ENCODE measurements at regions of chr4 and their contacts with region 1.

Region 1: DNA sequence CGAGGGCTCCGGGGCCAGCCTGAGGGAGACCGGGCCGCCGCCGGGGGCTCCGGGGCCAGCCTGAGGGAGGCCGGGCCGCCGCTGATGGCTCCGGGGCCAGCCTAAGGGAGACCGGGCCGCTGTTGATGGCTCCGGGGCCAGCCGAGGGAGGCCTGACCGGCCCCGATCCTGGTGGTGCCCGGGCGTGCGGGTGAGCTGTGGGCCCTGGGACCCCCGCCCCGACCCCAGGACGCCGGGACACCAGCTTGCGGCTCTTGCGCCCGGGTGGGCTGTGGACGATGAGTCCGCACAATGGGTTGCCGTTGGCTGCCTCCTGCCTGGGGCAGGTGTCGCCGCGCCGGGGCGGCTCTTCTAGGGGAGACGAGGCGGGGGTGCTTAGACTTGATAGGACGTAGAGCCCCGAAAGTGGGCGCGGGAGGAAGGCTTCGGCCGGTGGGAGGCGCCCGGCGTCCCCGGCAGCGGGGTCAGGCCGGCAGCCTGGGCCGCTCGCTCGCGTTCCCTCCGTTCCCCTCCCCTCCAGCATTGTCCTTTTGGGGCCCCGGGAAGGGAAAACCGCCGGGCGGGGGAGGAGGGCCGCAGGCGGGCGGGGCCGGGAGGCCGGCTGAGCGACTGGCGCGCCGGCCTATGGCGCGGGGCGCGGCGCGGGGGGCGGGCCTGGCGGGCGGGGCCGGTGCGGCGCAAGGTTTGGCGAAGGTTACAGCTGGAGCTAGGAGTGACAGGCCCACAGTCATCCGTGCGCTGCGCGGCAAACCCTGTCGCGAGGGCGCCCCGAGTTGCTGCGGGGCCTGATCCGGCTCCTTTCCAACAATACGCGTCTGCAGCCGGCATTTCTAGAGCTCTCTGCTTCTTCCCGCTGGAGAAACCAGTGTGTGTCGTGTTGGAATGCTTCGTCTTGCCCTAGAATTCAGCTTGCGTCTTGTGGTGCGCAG is 790 bp downstream of the KIAA0232 start:
- DNase-seq: peak; percentile 79 to 93 (median 87)
- ATAC-seq: peak; percentile 72
- H3K4me3 ChIP-seq: peak overlapping the region; percentile 72 to 93
- H3K4me3 Mint-ChIP-seq: peak overlapping the region; percentile 89
- H3K27ac ChIP-seq: peak overlapping the region; percentile 76 to 94
- H3K27ac Mint-ChIP-seq: peak overlapping the region; percentile 84
- H3K4me1 ChIP-seq: peaks cover 63% of the 10 kb centered on the region
- H3K4me1 Mint-ChIP-seq: peaks cover 70% of the 10 kb centered on the region
- H3K27me3 ChIP-seq: no peaks in the 10 kb centered on the region
- H3K27me3 Mint-ChIP-seq: no peaks in the 10 kb centered on the region
- CTCF ChIP-seq: no peak

Region 2: DNA sequence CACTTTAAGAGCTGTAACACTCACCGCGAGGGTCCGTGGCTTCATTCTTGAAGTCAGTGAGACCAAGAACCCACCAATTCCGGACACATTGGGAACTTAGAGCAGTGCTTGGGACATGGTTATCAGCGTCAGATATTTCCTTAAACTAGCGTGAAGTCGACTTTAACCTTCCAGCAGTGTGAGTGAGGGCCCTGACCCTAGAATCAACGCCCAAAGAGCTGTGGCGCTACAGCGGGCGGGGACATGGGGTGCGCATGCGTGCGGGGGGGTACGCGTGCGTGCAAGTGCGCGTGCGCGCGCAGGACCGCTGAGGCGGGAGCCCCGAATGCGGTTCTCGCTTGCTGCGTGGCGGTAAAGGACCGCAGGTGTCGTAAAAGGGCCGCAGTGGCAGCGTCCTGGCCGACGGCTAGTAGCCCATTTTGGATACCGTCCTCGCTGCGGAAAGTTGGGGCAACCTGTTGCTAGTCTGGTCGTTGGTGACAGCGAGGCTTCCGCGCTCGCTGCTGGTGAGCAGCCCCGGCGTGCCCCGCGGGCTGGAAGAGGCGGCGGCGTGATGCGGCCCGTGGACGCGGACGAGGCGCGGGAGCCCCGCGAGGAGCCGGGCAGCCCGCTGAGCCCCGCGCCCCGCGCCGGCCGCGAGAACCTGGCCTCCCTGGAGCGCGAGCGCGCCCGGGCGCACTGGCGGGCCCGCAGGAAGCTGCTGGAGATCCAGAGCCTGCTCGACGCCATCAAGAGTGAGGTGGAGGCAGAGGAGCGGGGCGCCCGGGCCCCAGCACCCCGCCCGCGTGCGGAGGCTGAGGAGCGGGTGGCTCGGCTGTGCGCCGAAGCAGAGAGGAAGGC is 109.4 kb before region 1 on chr4:
- CTCF ChIA-PET with region 1: no interaction called
- POLR2A ChIA-PET with region 1: interaction called, 18 read pairs
- intact Hi-C with region 1: loop called (anchors 1 kb)
- DNase-seq: peak; percentile 89 to 99 (median 93)
- ATAC-seq: peak; percentile 79
- H3K4me3 ChIP-seq: peak overlapping the region; percentile 62 to 92
- H3K4me3 Mint-ChIP-seq: peak overlapping the region; percentile 99
- H3K27ac ChIP-seq: peak overlapping the region; percentile 71 to 78
- H3K27ac Mint-ChIP-seq: peak overlapping the region; percentile 99
- H3K4me1 ChIP-seq: peaks cover 38% of the 10 kb centered on the region
- H3K4me1 Mint-ChIP-seq: peaks cover 48% of the 10 kb centered on the region
- H3K27me3 ChIP-seq: no peaks in the 10 kb centered on the region
- H3K27me3 Mint-ChIP-seq: no peaks in the 10 kb centered on the region
- CTCF ChIP-seq: no peak

Region 3: DNA sequence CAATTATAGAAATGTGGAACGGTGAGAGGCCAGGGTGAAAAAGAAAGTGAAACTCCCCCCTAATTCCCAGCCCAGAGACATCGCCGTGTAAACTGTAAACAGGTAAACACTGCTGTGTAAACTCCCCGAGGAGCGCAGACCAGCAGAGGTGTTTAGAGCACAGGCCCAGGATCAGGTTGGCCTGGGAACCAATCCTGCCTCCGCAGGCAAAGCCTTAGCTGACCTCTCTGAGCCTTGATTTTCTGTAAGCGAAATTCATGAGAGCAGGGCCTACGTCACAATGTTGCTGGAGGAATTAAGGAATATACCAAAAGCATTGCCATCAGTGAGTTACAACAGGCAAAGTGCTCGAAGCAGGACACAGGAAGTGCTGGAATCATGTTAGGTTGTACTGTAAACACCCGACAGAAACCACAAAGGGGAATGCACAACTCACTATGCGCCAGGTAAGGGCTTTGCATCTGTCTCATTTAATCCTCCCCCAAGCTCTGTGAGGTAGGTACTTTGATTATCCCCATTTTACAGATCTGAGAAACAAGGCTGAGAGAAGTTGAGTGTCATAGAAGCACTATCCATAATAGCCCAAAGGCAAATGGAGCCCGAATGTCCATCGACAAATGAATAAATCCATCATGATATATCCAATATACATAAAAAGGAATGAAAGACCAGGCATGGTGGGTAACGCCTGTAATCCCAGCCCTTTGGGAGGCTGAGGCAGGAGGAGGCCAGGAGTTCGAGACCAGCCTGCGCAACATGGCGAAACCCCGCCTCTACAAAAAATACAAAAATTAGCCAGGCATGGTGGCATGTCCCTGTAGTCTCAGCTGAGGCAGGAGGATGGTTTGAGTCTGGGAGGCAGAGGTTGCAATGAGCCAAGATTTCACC is 31.5 kb before region 1 on chr4:
- CTCF ChIA-PET with region 1: no interaction called
- POLR2A ChIA-PET with region 1: no interaction called
- intact Hi-C with region 1: loop called in 1 of 2 experiments (anchors 1 kb)
- DNase-seq: peak in 2 of 9 experiments; percentile 31 to 48
- ATAC-seq: peak; percentile 58
- H3K4me3 ChIP-seq: peak overlapping the region; percentile 18 to 44
- H3K4me3 Mint-ChIP-seq: peak overlapping the region; percentile 88
- H3K27ac ChIP-seq: peak overlapping the region; percentile 14 to 47
- H3K27ac Mint-ChIP-seq: peak overlapping the region; percentile 95
- H3K4me1 ChIP-seq: no peaks in the 10 kb centered on the region
- H3K4me1 Mint-ChIP-seq: peaks cover 18% of the 10 kb centered on the region
- H3K27me3 ChIP-seq: no peaks in the 10 kb centered on the region
- H3K27me3 Mint-ChIP-seq: no peaks in the 10 kb centered on the region
- CTCF ChIP-seq: no peak

Region 4: DNA sequence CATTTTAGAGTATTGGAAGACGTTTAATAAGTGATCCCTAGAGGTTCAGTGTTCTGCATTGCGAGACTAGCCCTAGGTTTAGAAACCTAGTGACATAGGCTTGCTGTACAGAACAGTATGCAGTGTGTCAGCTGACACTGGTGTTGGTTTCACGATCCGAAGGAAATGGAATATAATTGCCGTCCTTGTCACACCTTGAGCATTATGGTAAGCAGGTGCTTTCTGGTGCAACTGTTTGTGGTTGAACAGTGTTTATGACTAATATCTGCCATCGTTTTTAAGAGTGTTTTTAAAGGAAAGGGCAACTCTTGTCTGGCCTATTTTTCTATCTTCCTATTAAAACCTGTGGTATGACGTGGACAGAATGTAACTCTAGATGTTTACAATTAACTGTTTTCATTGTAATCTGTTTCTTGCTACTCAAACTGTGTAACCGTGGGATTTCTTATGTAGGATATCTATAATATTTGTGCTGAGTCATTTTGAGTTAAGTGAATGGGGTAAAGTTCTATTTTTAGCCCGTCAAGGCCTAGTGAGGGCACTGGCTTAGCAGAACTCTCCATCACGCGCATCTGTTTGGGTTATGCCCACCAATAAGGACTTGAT is 72.5 kb after region 1 on chr4:
- CTCF ChIA-PET with region 1: no interaction called
- POLR2A ChIA-PET with region 1: no interaction called
- intact Hi-C with region 1: loop called in 1 of 2 experiments (anchors 5 kb)
- DNase-seq: peak in 4 of 9 experiments; percentile 18 to 77 (median 54)
- ATAC-seq: peak; percentile 84
- H3K4me3 ChIP-seq: no peak overlapping the region
- H3K4me3 Mint-ChIP-seq: no peak overlapping the region
- H3K27ac ChIP-seq: peak overlapping the region in 1 of 2 experiments; percentile 53
- H3K27ac Mint-ChIP-seq: peak overlapping the region; percentile 73
- H3K4me1 ChIP-seq: no peaks in the 10 kb centered on the region
- H3K4me1 Mint-ChIP-seq: peaks cover 22% of the 10 kb centered on the region
- H3K27me3 ChIP-seq: no peaks in the 10 kb centered on the region
- H3K27me3 Mint-ChIP-seq: no peaks in the 10 kb centered on the region
- CTCF ChIP-seq: no peak

Region 5: DNA sequence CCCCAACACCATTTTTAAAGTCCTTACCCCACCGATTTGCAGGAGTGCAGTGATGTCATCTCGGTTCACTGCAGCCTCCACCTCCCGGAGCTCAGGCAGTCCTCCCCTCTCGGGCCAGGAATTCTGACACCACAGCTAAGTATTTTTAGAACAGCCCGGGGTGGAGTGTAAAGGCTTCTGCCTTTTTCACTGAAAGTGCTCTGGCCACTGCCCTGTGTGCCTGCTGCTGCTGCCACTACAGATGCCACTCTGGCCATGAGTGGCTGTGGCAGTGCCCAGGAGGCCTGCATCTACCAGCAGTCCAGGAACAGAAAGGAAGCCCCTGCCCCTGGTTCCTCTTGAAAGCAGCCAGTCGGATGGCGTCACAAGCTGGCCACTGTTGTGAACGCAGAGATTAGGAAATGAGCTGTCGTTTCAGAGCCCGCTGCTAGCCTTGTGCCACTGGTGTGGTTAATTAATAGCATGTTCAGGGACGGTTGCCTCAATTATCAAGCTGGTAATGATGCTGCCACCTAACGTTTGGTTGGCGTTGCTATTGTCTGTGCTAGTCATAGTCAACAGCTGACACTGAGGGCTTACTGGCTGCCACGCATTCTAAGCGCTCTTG is 102.7 kb after region 1 on chr4:
- CTCF ChIA-PET with region 1: no interaction called
- POLR2A ChIA-PET with region 1: no interaction called
- intact Hi-C with region 1: no loop called
- DNase-seq: peak in 2 of 9 experiments; percentile 45 to 55
- ATAC-seq: no peak
- H3K4me3 ChIP-seq: no peak overlapping the region
- H3K4me3 Mint-ChIP-seq: no peak overlapping the region
- H3K27ac ChIP-seq: no peak overlapping the region
- H3K27ac Mint-ChIP-seq: peak overlapping the region; percentile 66
- H3K4me1 ChIP-seq: peaks cover 3% of the 10 kb centered on the region
- H3K4me1 Mint-ChIP-seq: peaks cover 5% of the 10 kb centered on the region
- H3K27me3 ChIP-seq: no peaks in the 10 kb centered on the region
- H3K27me3 Mint-ChIP-seq: no peaks in the 10 kb centered on the region
- CTCF ChIP-seq: no peak

Region 6: GRCh38 chr4:6974138-6974848 is 191.0 kb after region 1 on chr4:
- CTCF ChIA-PET with region 1: interaction called, 3 read pairs
- POLR2A ChIA-PET with region 1: no interaction called
- intact Hi-C with region 1: loop called in 1 of 2 experiments (anchors 5 kb)
- DNase-seq: peak; percentile 59 to 90 (median 85)
- ATAC-seq: peak; percentile 100
- H3K4me3 ChIP-seq: no peak overlapping the region
- H3K4me3 Mint-ChIP-seq: no peak overlapping the region
- H3K27ac ChIP-seq: no peak overlapping the region
- H3K27ac Mint-ChIP-seq: peak overlapping the region; percentile 18
- H3K4me1 ChIP-seq: peaks cover 8% of the 10 kb centered on the region
- H3K4me1 Mint-ChIP-seq: peaks cover 21% of the 10 kb centered on the region
- H3K27me3 ChIP-seq: no peaks in the 10 kb centered on the region
- H3K27me3 Mint-ChIP-seq: no peaks in the 10 kb centered on the region
- CTCF ChIP-seq: peak; percentile 85

Region 7: DNA sequence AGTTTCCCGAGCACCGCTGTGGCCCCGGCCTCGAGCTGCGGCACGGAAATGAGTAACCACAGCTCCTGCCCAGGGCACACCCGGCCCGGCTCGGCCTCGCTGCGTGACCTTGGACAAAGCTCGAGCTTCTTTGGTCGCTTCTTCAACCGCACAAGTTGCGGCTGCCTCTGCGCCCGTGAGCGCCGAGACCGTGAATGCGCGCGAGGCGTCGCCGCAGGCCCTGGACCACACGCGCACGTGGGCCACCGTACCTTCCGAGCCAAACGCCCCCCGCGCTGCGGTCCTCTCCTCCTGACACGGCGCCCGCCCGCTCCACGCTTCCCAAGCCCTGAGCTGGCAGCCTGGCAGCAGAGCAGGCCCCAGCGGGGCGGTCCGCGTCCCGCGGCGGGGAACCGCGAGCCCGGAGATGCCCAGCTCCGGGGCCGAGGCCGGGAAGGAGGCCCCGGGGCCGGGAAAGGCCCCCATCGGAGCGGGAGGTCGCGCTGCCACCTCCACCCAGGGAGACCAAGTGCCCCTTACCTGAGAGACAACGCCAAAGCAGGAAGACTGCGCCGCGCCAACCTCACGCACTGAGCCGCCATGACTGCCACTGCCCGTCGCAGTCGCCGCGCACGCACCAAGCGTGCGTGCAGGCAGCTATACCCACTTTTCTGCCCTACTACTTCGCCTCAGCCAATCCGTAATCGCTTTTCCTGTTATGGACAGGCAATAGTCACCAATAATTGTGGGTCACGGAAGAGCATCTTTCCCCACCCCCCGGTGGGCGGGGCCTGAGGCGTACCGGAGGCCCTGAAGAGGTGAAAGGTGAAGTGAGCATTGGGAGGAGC is 284.3 kb after region 1 on chr4 and contains the start of gene GRPEL1:
- CTCF ChIA-PET with region 1: interaction called, 3 read pairs
- POLR2A ChIA-PET with region 1: no interaction called
- intact Hi-C with region 1: loop called (anchors 1 kb)
- DNase-seq: peak; percentile 100
- ATAC-seq: peak; percentile 92
- H3K4me3 ChIP-seq: peak within 1 kb of the TSS; percentile 86 to 87
- H3K4me3 Mint-ChIP-seq: peak within 1 kb of the TSS; percentile 95
- H3K27ac ChIP-seq: peak within 1 kb of the TSS; percentile 83 to 89
- H3K27ac Mint-ChIP-seq: peak within 1 kb of the TSS; percentile 97
- H3K4me1 ChIP-seq: peaks cover 35% of the 10 kb centered on the region
- H3K4me1 Mint-ChIP-seq: peaks cover 46% of the 10 kb centered on the region
- H3K27me3 ChIP-seq: no peaks in the 10 kb centered on the region
- H3K27me3 Mint-ChIP-seq: no peaks in the 10 kb centered on the region
- CTCF ChIP-seq: no peak
- total RNA-seq, gene GRPEL1: 61.1 to 61.5 TPM

Region 8: DNA sequence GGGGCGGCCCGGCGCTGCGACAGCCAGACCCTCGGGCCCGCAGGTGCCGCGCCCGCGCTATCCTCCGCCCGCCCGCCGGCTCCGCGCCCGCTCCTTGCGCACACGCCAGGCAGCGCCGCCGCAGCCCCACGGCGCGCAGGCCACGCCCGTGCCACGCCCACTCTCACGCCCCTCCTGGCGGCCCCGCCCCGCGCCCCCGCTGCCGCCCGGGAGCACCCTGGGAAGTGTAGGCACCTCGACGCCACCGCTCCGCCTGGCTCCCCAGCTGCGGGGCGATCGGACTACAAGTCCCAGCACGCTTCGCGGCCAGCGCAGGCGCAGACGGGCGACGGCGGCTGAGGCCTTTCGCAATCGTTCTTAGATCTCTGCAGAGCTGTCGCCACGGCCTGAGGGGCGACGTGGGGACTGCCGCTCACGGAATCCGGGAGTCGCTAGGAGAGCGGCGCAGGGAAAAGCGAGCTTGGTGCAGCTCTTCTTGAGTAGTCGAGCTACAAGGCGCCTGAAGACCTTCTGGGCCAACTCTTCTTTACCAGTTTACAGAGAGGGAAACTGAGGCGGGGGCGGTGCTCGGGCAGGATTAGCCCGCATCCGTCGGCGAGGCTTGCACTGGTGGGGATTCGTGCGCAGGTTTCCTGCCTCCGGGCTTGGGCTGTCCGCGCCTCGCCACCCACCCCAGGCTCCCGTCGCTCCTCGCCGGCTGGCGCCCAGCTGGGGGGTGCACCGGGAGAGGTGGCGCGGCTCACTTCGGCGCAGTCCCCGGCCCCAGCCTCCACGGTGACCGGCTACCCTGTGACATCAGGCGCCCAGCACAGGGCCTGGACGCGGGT is 1375.6 kb after region 1 on chr4 and contains the start of gene ABLIM2:
- CTCF ChIA-PET with region 1: no interaction called
- POLR2A ChIA-PET with region 1: no interaction called
- intact Hi-C with region 1: loop called in 1 of 2 experiments (anchors 5 kb)
- DNase-seq: peak; percentile 97 to 100 (median 99)
- ATAC-seq: peak; percentile 99
- H3K4me3 ChIP-seq: peak within 1 kb of the TSS; percentile 90 to 97
- H3K4me3 Mint-ChIP-seq: peak within 1 kb of the TSS; percentile 89
- H3K27ac ChIP-seq: peak within 1 kb of the TSS; percentile 48 to 56
- H3K27ac Mint-ChIP-seq: peak within 1 kb of the TSS; percentile 72
- H3K4me1 ChIP-seq: peaks cover 18% of the 10 kb centered on the region
- H3K4me1 Mint-ChIP-seq: peaks cover 16% of the 10 kb centered on the region
- H3K27me3 ChIP-seq: peaks cover 0 to 6% of the 10 kb centered on the region in 2 experiments
- H3K27me3 Mint-ChIP-seq: no peaks in the 10 kb centered on the region
- CTCF ChIP-seq: no peak
- total RNA-seq, gene ABLIM2: 1.2 to 1.6 TPM

Measured in CD8-positive, alpha-beta T cell (primary cell).